Ovary (tissue), 10 donors: ENCODE measurements at regions of chr1 and their contacts with region 1.

Region 1: GRCh38 chr1:37602750-37603694 is 7.3 kb upstream of the GNL2 start:
- DNase-seq: no peak
- H3K4me3 ChIP-seq: no peak overlapping the region
- H3K27ac ChIP-seq: no peak overlapping the region
- H3K4me1 ChIP-seq: peaks cover 2% of the 10 kb centered on the region
- H3K27me3 ChIP-seq: no peaks in the 10 kb centered on the region
- CTCF ChIP-seq: peak in 1 of 3 donors; percentile 22
- EP300 ChIP-seq: no peak
- POLR2A ChIP-seq: no peak

Region 2: GRCh38 chr1:37682334-37682987 is 79.4 kb after region 1 on chr1:
- intact Hi-C with region 1: loop called in 2 of 4 experiments (anchors 5 to 10 kb)
- DNase-seq: peak; percentile 55 to 79 (median 74)
- H3K4me3 ChIP-seq: no peak overlapping the region
- H3K27ac ChIP-seq: no peak overlapping the region
- H3K4me1 ChIP-seq: no peaks in the 10 kb centered on the region
- H3K27me3 ChIP-seq: no peaks in the 10 kb centered on the region
- CTCF ChIP-seq: peak; percentile 59 to 82 (median 77)
- EP300 ChIP-seq: no peak
- POLR2A ChIP-seq: no peak

Region 3: DNA sequence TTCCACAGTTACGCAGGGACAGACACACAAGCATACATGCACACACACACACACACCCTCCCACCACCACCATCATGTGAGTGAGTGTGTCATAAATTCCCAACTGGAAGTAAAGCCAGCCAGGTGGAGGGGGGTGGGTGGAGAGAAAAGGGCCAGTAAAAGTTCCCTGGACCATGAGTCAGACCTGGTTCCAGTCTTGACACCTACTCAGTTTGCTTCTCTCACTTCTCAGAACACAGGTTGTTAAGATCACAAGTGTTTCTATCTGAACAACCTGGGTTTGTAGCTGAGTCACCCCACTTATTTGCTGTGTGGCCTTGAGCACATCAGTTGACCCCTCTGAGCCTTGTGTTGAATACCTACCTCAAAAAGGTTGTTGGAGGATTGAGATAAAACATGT is 152.3 kb after region 1 on chr1:
- intact Hi-C with region 1: no loop called
- DNase-seq: no peak
- H3K4me3 ChIP-seq: no peak overlapping the region
- H3K27ac ChIP-seq: no peak overlapping the region
- H3K4me1 ChIP-seq: no peaks in the 10 kb centered on the region
- H3K27me3 ChIP-seq: no peaks in the 10 kb centered on the region
- CTCF ChIP-seq: no peak
- EP300 ChIP-seq: no peak
- POLR2A ChIP-seq: no peak